CD4-positive, alpha-beta memory T cell (primary cell): ENCODE measurements at regions of chr11 and their contacts with region 1.

Region 1: GRCh38 chr11:128052912-128053641 is 534.3 kb downstream of the ETS1 start:
- DNase-seq: peak in 4 of 5 donors; percentile 37 to 48 (median 46)
- H3K4me3 ChIP-seq: peak overlapping the region in 1 of 2 donors; percentile 44
- H3K4me3 Mint-ChIP-seq: peak overlapping the region; percentile 53 to 83 (median 78)
- H3K27ac ChIP-seq: peak overlapping the region; percentile 52
- H3K27ac Mint-ChIP-seq: peak overlapping the region; percentile 71 to 95 (median 85)
- H3K4me1 ChIP-seq: peaks cover 69% of the 10 kb centered on the region
- H3K4me1 Mint-ChIP-seq: peaks cover 49 to 78% (median 65%) of the 10 kb centered on the region in 4 donors
- H3K27me3 ChIP-seq: no peaks in the 10 kb centered on the region
- H3K27me3 Mint-ChIP-seq: no peaks in the 10 kb centered on the region

Region 2: DNA sequence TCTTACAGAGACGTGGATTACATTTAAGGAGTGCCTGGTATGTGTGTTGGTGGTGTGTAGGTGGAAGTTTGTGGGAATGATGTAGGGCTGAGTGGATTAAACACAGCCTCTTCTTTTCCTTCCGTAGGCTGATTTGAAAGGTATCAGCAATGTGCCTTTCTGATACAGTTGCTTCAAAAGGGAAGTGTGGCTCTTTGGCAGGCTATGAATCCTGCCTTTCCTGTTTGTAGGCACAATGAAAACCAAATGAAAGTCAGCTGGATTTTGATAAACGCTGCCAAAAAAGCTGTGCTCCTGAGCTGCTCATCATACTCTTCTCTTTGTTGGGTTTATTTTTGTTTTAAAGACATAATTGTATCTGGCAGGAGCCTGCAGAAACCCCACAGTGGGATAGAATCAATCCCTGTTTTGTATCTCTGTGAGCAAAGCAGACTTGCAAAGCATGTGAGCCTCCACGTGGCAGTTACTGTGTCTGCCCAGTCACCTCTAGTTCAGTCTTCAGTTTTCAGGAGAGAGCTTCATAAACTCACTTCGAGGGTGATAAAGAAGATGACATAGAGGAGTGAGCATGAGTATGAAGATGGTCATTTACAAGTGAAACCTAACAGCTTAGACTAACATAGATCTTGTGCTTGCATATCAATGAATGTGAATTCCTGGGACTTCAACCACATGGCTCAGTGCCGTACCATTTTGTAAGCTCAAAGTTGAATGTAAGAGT is 396.8 kb before region 1 on chr11:
- CTCF ChIA-PET with region 1: no interaction called
- POLR2A ChIA-PET with region 1: no interaction called
- intact Hi-C with region 1: no loop called
- DNase-seq: no peak
- H3K4me3 ChIP-seq: no peak overlapping the region
- H3K4me3 Mint-ChIP-seq: no peak overlapping the region
- H3K27ac ChIP-seq: no peak overlapping the region
- H3K27ac Mint-ChIP-seq: no peak overlapping the region
- H3K4me1 ChIP-seq: no peaks in the 10 kb centered on the region
- H3K4me1 Mint-ChIP-seq: no peaks in the 10 kb centered on the region
- H3K27me3 ChIP-seq: no peaks in the 10 kb centered on the region
- H3K27me3 Mint-ChIP-seq: peaks cover 1% of the 10 kb centered on the region in 2 donors

Region 3: DNA sequence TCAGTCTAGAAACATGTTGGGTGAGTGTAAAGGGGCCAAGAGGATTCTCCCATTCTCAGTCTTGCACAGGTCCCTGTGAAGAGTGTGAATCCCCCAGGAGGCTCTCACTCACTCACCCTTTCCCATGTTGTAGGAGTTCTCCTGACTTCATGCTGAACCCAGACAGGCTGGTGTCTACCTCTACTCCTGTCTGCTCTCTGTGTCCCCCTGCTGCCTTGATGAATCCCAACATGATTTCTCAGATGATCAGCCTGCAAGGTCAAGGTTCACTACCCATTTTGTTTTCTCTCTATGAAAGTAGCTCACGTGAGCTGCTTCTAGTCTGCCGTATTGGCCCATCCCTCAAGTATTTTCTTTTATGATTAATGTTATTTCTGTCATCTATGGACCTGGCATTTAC is 33.7 kb after region 1 on chr11:
- CTCF ChIA-PET with region 1: interaction called, 8 read pairs
- POLR2A ChIA-PET with region 1: interaction called, 3 read pairs
- intact Hi-C with region 1: loop called (anchors 5 kb)
- DNase-seq: peak in 1 of 5 donors; percentile 10
- H3K4me3 ChIP-seq: no peak overlapping the region
- H3K4me3 Mint-ChIP-seq: peak overlapping the region in 3 of 8 donors; percentile 31 to 53 (median 44)
- H3K27ac ChIP-seq: no peak overlapping the region
- H3K27ac Mint-ChIP-seq: peak overlapping the region in 6 of 7 donors; percentile 8 to 68 (median 25)
- H3K4me1 ChIP-seq: peaks cover 20% of the 10 kb centered on the region
- H3K4me1 Mint-ChIP-seq: peaks cover 30 to 52% (median 41%) of the 10 kb centered on the region in 4 donors
- H3K27me3 ChIP-seq: no peaks in the 10 kb centered on the region
- H3K27me3 Mint-ChIP-seq: no peaks in the 10 kb centered on the region

Region 4: DNA sequence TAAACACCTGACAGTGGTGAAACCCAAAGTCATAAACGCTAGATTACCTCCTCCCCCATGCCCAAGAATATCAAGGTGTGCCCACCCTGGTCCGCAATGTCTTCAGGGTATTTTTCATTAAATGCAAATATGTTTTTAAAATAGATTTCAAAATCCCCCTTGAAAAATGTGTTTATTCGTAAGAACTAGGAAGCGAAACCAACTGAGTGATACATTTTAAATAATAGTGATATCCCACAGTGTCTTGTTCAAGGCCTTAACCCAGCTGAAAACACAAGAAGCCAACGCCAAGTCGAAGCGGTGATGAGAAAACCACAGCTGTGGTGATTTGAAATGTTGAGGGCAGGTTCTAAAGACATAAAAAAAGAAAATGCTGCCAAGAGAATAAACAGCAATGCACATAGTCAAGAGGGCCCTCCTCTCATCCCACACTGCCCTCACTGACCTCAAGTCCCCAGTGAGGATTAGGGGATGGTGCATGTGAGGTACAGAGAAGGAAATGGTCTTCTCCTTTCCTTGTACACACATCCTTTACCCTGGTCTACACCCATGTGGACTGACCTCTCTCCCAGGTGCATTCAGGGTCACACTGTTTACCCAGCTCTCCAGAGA is 788.5 kb after region 1 on chr11:
- CTCF ChIA-PET with region 1: no interaction called
- POLR2A ChIA-PET with region 1: no interaction called
- intact Hi-C with region 1: loop called (anchors 5 kb)
- DNase-seq: peak in 4 of 5 donors; percentile 35 to 48 (median 40)
- H3K4me3 ChIP-seq: no peak overlapping the region
- H3K4me3 Mint-ChIP-seq: peak overlapping the region in 7 of 8 donors; percentile 25 to 75 (median 59)
- H3K27ac ChIP-seq: no peak overlapping the region
- H3K27ac Mint-ChIP-seq: peak overlapping the region; percentile 86 to 95 (median 87)
- H3K4me1 ChIP-seq: peaks cover 99% of the 10 kb centered on the region
- H3K4me1 Mint-ChIP-seq: peaks cover 72 to 100% (median 90%) of the 10 kb centered on the region in 4 donors
- H3K27me3 ChIP-seq: no peaks in the 10 kb centered on the region
- H3K27me3 Mint-ChIP-seq: no peaks in the 10 kb centered on the region